Posterior cingulate gyrus (tissue), 11 donors: ENCODE measurements at regions of chr22 and their contacts with region 1.

Region 1: GRCh38 chr22:36702842-36703215 is 723 bp downstream of the CACNG2 start:
- DNase-seq: no peak

Region 2: DNA sequence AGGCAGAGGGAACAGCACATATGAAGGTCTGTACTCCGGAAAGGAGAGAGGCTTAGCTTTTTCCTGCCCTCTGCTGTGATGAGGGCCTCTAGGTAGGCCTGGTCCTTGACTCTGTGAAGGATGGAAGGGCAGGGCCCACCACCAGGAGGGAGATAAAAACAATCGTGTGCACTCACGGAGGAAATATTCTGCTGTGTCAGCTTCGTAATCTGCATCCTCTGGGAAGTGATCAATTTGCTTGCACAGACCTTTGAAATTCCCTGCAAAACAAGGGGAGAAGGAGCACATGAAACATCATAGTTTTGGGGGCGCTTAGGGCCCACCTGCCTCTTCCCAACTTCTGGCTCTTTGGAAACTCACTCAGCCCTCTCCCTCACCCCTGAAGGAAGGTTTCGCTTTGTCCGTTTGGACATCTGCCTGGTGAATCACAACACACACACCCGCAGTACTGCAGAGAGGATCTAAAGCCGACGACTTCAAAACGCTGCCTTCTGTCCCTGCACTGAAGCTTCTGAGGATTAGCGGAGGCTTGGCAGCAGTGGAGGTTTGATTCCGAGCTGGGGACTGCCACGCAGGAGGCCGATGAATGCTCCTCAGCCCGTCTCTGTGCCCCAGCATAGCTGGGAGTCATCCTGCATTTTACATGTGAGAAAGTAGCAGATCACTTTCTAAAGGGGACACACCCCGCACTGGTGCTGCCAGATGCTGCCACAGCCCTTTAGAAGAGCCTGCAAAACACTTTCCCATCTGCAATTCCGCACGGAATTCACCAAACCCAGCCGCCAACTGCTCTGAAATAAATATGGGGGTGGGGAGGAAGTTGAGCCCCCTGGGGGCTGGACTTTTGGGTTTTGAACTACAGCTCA is 115.3 kb before region 1 on chr22:
- intact Hi-C with region 1: loop called (anchors 5 kb)
- DNase-seq: peak in 6 of 10 donors; percentile 38 to 92 (median 64)